ENCODE measurements at regions of chr10 and their contacts with region 1.

Region 1: GRCh38 chr10:68647672-68648341 is 73.2 kb upstream of the CCAR1 start:
- DNase-seq: peak; percentile 84
- H3K27ac ChIP-seq: no peak overlapping the region; the same call in 1 of the 2 replicates
- CTCF ChIP-seq: no peak

Region 2: DNA sequence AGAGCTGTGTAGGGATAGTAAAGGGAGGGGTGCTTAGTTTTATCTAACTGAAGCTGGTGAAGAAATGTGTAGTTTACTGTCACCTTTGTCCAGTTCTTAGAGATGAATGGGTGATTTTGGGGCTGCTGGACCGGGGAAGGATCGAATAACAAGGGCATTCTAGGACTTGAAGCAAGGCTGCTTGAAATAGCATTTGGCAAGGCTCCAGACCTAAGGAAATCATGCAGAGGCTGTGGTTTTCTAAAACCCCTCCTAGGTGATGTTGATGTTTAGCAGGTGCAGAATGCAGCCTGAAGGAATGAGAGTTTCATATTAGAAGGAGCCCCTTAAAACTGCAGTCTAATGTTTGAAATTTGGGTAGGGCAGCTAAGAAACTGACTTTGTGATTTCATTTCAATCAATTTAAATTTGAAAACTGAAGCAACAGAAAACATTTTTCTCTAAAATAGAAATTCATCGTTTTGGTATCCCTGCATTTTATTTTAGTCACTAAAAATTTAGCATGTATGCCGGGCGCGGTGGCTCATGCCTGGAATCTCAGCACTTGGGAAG is 19.2 kb before region 1 on chr10:
- CTCF ChIA-PET with region 1: no interaction called
- POLR2A ChIA-PET with region 1: no interaction called
- DNase-seq: no peak
- H3K27ac ChIP-seq: no peak overlapping the region
- CTCF ChIP-seq: no peak

Region 3: GRCh38 chr10:68684413-68684812 is 36.6 kb after region 1 on chr10:
- CTCF ChIA-PET with region 1: interaction called, 10 read pairs
- POLR2A ChIA-PET with region 1: no interaction called
- DNase-seq: no peak
- H3K27ac ChIP-seq: no peak overlapping the region
- CTCF ChIP-seq: no peak